ENCODE measurements at regions of chr17 and their contacts with region 1.

Region 1: GRCh38 chr17:51636291-51636690 is 375.9 kb downstream of the UTP18 start:
- DNase-seq: no peak
- H3K4me3 ChIP-seq: no peak overlapping the region
- H3K27ac ChIP-seq: no peak overlapping the region
- H3K4me1 ChIP-seq: peaks cover 7% of the 10 kb centered on the region
- H3K27me3 ChIP-seq: no peaks in the 10 kb centered on the region
- CTCF ChIP-seq: peak in 1 of 2 donors; percentile 36

Region 2: GRCh38 chr17:51580869-51581268 is 55.4 kb before region 1 on chr17:
- CTCF ChIA-PET with region 1: no interaction called
- dilution Hi-C with region 1: no loop called
- in situ Hi-C with region 1: no loop called
- intact Hi-C with region 1: no loop called
- DNase-seq: no peak
- H3K4me3 ChIP-seq: no peak overlapping the region
- H3K27ac ChIP-seq: no peak overlapping the region
- H3K4me1 ChIP-seq: no peaks in the 10 kb centered on the region
- H3K27me3 ChIP-seq: no peaks in the 10 kb centered on the region
- CTCF ChIP-seq: no peak

Region 3: GRCh38 chr17:51601622-51602261 is 34.5 kb before region 1 on chr17:
- CTCF ChIA-PET with region 1: no interaction called
- dilution Hi-C with region 1: loop called (anchors 5 kb)
- in situ Hi-C with region 1: no loop called
- intact Hi-C with region 1: no loop called
- DNase-seq: no peak
- H3K4me3 ChIP-seq: no peak overlapping the region
- H3K27ac ChIP-seq: no peak overlapping the region
- H3K4me1 ChIP-seq: no peaks in the 10 kb centered on the region
- H3K27me3 ChIP-seq: no peaks in the 10 kb centered on the region
- CTCF ChIP-seq: no peak

Region 4: DNA sequence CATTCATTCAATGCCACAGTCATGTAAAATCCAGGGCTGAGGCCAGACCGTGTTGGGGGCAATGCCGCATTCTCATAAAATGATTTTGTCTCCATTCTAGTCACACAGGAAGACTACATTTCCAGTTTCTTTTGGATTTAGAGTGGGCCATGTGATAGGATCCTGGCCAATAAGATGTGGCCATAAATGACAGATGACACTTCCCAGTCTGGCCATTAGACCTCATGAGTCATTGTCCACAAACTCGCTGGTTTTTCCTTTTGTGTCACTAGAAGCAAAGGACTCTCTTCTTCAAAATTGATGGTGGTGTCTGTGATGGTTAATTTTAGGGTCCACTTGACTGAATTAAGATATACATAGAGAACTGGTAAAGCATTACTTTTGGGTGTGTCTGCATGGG is 23.6 kb before region 1 on chr17:
- CTCF ChIA-PET with region 1: no interaction called
- dilution Hi-C with region 1: no loop called
- in situ Hi-C with region 1: no loop called
- intact Hi-C with region 1: no loop called
- DNase-seq: no peak
- H3K4me3 ChIP-seq: no peak overlapping the region
- H3K27ac ChIP-seq: no peak overlapping the region
- H3K4me1 ChIP-seq: peaks cover 11% of the 10 kb centered on the region
- H3K27me3 ChIP-seq: no peaks in the 10 kb centered on the region
- CTCF ChIP-seq: no peak

Region 5: DNA sequence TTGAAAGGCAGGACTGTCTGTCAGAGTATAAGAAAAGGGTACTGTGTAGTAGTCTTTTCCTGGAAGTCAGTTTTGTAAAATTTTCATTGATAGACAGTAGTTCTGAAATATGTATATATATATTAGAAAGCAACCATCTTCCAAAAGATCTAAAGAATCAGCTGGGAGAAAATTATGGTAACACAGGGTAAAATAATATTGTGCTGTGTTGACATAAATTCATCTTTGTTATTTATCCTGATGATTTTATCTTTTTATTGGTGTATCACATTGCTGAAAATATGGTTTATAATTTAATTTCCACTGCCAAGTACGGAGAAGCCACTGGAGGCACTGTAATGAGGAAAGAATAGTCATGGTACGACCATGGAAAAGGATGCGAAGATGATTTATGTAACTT is 197.3 kb after region 1 on chr17:
- CTCF ChIA-PET with region 1: no interaction called
- dilution Hi-C with region 1: no loop called
- in situ Hi-C with region 1: no loop called
- intact Hi-C with region 1: no loop called
- DNase-seq: no peak
- H3K4me3 ChIP-seq: no peak overlapping the region
- H3K27ac ChIP-seq: no peak overlapping the region
- H3K4me1 ChIP-seq: no peaks in the 10 kb centered on the region
- H3K27me3 ChIP-seq: no peaks in the 10 kb centered on the region
- CTCF ChIP-seq: no peak

Measured in mammary epithelial cell (primary cell).